Naive thymus-derived CD8-positive, alpha-beta T cell (primary cell): ENCODE measurements at regions of chr10 and their contacts with region 1.

Region 1: DNA sequence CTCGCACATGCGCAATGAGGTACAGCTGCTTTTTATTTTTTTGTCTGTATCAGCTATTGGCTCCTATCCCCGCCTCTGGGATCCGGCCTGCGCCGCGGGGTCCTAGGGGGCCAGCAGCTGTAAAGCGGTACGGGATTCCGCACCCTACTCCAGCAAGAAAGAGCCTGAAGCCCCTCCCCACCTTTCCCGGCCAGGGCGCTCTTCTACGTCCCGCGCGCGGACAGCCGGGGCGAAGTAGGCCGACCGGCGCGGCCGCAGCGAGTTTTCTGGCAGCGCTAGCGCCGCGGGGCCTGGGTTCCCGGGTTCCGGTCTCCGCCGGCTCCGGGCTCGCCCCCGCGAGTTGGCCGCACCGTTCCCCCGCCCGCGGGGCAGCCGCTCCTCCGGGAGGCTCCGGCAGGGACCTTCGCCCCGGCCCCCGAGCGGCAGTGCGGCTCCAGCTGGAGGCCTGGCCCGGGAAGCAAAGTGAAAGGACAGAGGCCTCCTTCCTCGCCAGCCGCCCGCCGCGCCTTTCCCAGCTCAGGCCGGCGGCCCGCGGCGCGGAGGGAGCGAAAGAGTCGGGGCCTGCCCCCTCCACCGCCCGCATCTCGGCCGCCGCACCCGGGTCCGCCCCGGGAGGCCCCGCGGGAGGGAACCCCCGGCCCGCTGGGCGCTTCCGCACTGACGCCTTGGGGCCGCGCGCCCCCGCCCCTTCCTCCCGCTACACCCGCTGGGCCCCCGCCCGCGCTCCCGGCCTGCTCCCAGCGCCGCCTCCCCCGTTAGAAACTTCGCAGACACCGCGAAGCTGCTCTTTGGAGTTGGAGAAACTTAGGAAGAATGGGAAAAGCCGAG is 4.7 kb upstream of the SPAG6 start:
- DNase-seq: peak in 9 of 10 donors; percentile 30 to 74 (median 53)
- ATAC-seq: peak; percentile 45 to 48
- H3K4me3 Mint-ChIP-seq: peak overlapping the region; percentile 70 to 91 (median 84)
- H3K27ac Mint-ChIP-seq: peak overlapping the region; percentile 39 to 90 (median 84)
- H3K4me1 Mint-ChIP-seq: peaks cover 2 to 38% (median 14%) of the 10 kb centered on the region in 4 donors
- H3K27me3 Mint-ChIP-seq: peaks cover 21 to 74% (median 71%) of the 10 kb centered on the region in 5 donors

Region 2: DNA sequence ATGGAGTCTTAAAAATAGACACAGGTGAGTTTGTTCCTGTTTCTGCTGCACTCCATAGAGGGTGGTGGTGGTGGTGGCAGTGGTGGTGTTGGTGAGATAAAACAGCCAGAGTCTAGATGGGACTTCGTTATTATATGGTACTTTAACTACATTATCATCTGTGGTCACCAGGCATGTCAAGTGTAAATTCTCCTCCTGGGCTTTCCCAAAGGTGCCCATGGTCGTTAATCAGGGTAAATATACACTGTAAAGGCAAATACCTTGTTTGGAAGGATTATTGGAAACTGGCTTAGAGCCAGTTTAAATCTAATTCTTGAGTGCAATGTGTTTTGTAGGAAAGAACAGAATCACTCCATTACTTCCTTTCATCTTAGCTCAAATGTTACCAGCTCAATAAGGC is 45.9 kb before region 1 on chr10:
- POLR2A ChIA-PET with region 1: no interaction called
- DNase-seq: no peak
- ATAC-seq: no peak
- H3K4me3 Mint-ChIP-seq: no peak overlapping the region
- H3K27ac Mint-ChIP-seq: no peak overlapping the region
- H3K4me1 Mint-ChIP-seq: no peaks in the 10 kb centered on the region
- H3K27me3 Mint-ChIP-seq: peaks cover 3 to 24% (median 11%) of the 10 kb centered on the region in 5 donors

Region 3: DNA sequence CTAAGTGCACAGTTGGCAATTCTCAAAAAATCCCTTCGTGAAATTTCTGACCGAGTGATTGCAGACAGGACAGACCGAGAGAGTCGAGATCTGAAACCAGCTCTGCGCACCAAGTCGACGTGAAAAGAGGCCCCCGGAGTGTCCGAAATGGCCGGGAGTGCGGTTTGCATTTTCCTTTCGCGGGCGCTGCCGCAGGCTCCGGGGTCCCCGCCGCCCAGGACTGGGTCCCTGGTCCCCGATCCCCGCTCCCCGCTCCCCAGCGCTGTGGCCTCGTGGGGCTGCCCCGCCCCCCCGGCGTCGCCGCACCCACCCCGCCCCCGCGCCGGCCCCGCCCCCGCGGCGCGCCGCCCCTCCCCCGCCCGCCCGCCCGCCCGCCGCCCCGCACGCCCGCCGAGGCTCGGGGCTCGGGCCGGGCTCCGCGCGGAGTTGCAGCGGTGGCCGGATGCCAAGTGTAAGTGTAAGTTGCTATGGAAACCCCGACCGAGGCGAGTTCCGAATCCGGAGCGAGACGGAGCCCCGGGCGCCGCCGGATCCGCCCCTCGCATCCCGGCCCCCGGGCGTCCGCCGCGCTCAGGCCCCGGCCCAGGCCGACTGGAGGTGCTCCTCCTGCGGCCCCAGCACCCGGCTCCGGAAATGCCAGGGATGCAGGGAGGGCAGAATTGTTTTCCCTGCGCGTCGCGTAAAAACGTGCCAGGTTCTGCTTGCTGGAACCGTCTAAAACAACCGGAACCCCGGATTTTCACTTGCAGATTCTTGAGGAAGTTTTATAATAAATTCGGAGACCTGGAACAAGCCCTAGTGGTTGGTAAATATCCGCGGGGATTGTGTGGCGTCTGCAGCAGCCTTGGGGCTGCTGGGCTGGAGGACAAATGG is 15.1 kb before region 1 on chr10:
- POLR2A ChIA-PET with region 1: interaction called, 14 read pairs
- DNase-seq: peak; percentile 68 to 91 (median 78)
- ATAC-seq: peak; percentile 55 to 67
- H3K4me3 Mint-ChIP-seq: peak overlapping the region; percentile 82 to 94 (median 88)
- H3K27ac Mint-ChIP-seq: peak overlapping the region; percentile 51 to 96 (median 88)
- H3K4me1 Mint-ChIP-seq: peaks cover 7 to 43% (median 39%) of the 10 kb centered on the region in 4 donors
- H3K27me3 Mint-ChIP-seq: peaks cover 3 to 35% (median 25%) of the 10 kb centered on the region in 5 donors